IMR-90 (cell line): ENCODE measurements at regions of chr4 and their contacts with region 1.

Region 1: DNA sequence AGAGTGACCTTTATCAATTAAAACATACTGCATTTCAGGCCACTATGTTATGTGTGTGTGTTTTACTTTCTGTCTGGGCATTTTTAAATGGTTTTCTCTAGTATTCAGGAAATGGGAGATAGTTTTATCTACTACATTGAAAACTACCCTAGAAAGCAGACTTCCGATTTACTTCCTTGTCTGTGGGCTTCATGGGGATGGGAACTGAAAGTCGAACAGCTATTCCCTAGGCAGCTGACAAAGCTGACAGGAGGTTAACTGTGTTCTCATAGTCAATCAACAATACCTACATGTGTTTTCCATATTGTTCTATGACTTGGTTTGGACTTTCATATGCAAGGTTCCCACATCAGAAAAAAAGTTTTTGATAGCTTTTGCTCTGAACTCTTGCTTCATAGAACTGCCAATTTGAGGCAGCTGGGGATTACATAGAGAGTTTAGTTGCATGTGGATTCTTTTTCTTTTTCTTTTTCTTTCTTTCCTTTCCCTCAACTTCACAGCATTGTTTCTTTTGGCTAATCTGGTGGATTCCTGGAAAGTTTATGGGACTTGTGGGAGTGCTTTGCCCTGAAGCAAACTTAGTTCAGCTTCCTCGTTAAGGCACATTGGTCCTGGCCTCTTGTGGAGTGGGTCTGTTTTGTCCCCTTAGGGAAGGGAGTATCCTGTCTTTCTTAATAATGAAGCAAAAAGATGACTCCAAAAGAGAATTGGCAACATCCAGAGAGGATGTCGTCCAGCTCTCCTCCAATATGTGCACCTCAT is 327.1 kb upstream of the GIMD1 start:
- DNase-seq: no peak
- ATAC-seq: no peak
- H3K4me3 ChIP-seq: no peak overlapping the region
- H3K27ac ChIP-seq: no peak overlapping the region
- H3K4me1 ChIP-seq: no peaks in the 10 kb centered on the region
- H3K27me3 ChIP-seq: no peaks in the 10 kb centered on the region
- CTCF ChIP-seq: no peak
- POLR2A ChIP-seq: no peak
- RAD21 ChIP-seq: no peak

Region 2: DNA sequence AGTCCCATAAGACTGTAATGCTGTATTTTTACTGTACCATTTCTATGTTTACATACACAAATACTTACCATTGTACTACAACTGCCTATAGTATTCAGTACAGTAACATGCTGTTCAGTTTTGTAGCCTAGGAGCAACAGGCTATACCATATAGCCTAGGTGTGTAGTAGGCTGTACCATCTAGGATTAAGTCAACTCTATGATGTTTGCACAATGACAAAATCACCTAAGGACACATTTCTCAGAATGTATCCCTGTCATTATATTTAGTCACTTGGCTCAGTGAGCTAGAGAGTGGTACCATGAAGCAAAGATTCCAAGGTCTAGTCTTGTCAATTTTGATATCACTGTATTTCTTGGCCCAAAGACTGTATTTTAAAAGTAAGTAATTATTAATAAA is 911.0 kb after region 1 on chr4:
- CTCF ChIA-PET with region 1: no interaction called
- POLR2A ChIA-PET with region 1: no interaction called
- dilution Hi-C with region 1: no loop called
- in situ Hi-C with region 1: no loop called
- intact Hi-C with region 1: loop called (anchors 5 kb)
- DNase-seq: no peak
- ATAC-seq: no peak
- H3K4me3 ChIP-seq: no peak overlapping the region
- H3K27ac ChIP-seq: no peak overlapping the region
- H3K4me1 ChIP-seq: peaks cover 2% of the 10 kb centered on the region; the same call in 1 of the 2 replicates
- H3K27me3 ChIP-seq: no peaks in the 10 kb centered on the region
- CTCF ChIP-seq: no peak
- POLR2A ChIP-seq: no peak
- RAD21 ChIP-seq: no peak